HEK293T (cell line): ENCODE measurements at regions of chr9 and their contacts with region 1.

Region 1: GRCh38 chr9:35732122-35732799 is at the starts of genes CREB3 and TLN1:
- DNase-seq: peak; percentile 93

Region 2: GRCh38 chr9:35646533-35647265 is 85.6 kb before region 1 on chr9:
- CTCF ChIA-PET with region 1: interaction called, 5 read pairs
- POLR2A ChIA-PET with region 1: interaction called, 12 read pairs
- DNase-seq: peak; percentile 94

Region 3: DNA sequence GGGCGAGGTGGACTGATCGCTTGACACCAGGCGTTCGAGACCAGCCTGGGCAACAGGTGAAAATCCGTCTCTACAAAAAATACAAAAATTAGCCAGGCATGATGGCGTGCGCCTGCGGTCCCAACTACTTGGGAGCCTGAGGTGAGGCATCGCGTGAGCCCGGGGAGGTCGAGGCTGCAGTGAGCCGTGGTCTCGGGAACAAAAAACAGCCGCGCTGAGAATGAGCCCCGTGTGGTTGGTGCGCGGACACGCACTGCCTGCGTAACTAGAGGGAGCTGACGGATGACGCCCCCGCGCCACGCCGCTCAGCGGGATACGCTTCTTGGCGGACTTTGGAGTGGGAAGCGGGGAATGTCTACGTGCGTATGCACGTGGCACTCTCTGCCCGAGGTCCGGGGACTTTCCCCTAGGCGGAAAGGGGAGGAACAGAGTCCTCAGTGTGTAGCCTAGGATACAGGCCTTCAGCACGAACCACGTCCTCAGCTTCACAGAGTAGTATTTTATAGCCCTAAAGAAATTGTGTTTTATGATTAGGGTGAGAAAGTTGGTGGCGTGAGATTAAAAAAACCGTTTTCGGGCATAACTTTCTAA is 74.6 kb before region 1 on chr9 and contains the start of gene RMRP:
- CTCF ChIA-PET with region 1: interaction called, 3 read pairs
- POLR2A ChIA-PET with region 1: interaction called, 10 read pairs
- DNase-seq: peak; percentile 89

Region 4: DNA sequence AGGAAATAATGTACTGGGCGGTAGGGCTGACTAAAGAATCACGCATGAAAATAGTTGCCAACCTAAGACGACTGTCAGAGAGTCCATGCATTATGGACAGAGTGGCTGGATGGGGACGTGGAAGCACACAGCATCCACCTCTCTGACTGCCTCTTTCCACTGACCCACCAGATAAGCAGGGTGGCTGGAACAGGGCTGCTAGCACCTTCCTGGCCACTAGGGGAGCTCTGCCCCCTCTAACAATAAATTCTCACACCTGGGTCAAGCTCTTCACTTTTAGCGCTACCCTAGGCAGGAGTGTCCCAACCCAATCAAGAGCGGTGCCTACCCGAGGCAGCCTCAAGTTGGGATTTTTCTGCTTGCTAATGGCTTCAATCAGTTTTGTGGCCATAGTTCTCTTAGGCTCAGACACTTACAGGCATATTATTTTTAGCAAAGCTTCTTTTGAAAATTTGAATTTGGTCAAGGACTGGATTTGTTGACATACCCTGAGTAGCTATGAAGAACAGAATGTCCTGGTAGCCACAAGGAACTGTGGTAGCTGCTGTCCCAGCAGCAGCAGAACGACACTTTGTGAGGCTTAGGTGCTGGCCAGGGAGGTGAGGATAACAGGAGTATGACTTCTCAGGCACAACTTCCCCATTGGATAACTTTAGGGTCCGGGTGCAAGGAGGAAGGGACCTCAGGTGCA is 35.6 kb before region 1 on chr9:
- CTCF ChIA-PET with region 1: interaction called, 11 read pairs
- POLR2A ChIA-PET with region 1: interaction called, 5 read pairs
- DNase-seq: peak; percentile 74

Region 5: GRCh38 chr9:35743452-35743851 is 11.2 kb after region 1 on chr9:
- CTCF ChIA-PET with region 1: interaction called, 5 read pairs
- POLR2A ChIA-PET with region 1: interaction called, 20 read pairs
- DNase-seq: no peak

Region 6: DNA sequence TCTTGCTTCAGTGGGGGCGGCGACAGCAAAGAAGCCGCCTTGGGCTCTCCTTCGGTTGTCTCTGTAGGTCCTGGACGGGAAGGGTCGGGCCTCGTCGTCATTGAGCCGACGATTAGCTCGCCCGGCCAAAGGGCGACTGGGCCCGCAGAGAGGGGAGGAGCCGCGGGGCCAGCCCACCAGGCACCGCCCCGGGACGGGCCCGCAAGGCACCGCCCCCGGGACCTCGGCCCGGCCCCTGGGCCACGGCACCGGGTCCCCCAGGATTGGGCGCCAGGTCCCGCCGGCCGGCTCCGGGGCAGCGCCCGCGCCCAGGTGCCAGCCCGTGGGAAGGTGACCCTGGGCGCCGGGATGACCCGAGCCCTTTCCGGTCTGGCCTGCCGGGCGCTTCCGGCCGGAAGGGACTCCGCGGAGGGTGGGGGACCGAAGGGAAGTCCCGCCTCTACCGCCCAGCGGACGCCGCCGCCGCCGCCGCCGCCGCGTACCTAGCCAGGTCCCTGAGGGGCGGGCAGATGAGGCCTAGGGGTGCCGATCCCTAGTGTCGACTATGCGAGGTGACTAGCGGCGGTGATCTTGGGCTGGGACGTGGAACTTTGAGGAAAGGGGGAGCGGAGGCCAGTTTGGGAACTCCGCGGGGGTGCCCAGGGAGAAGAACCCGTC is 16.7 kb after region 1 on chr9 and contains the starts of genes GBA2 and RGP1:
- CTCF ChIA-PET with region 1: interaction called, 5 read pairs
- POLR2A ChIA-PET with region 1: interaction called, 20 read pairs
- DNase-seq: peak; percentile 87